Head of caudate nucleus (tissue), 42 donors: ENCODE measurements at regions of chr18 and their contacts with region 1.

Region 1: GRCh38 chr18:839224-840022 is 27.4 kb upstream of the YES1 start:
- DNase-seq: peak; percentile 66 to 96 (median 90)

Region 2: GRCh38 chr18:623761-624620 is 215.4 kb before region 1 on chr18:
- intact Hi-C with region 1: loop called (anchors 10 kb)
- DNase-seq: peak; percentile 51 to 94 (median 79)